Gastrocnemius medialis (tissue), 4 donors: ENCODE measurements at regions of chr16 and their contacts with region 1.

Region 1: DNA sequence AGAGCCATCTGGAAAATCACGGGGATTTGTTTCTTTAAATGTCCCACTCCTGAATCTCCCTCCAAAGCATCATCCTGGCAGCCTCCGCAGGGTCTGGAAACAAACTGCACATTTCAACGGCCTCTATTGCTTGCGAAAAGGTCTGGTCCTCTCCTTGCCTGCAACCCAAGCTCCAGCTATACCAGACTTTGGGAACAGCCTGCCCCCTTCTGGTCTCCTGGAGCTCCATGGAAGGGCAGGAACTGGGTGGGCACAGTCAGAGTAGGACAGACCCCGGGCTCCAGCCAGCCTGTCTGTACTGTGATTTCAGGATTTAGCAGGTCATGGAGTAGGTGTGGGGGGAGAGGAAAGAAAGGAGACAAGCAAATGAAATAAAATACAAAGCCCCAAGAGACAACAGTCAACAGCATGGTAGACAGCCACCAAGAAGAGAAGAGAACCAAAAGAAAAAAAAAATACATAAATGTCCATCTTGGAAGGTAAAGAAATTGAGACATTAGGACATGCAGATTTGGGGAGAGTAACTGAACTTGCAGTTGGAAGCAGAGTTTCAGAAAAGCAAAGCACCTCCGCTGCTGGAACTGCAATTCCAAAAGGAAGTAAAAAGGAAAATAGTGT is 2.7 kb downstream of the XYLT1 start:
- DNase-seq: peak; percentile 30 to 36
- ATAC-seq: no peak
- H3K4me3 ChIP-seq: no peak overlapping the region
- H3K27ac ChIP-seq: no peak overlapping the region
- H3K4me1 ChIP-seq: peaks cover 7 to 20% of the 10 kb centered on the region in 2 donors
- H3K27me3 ChIP-seq: peaks cover 13 to 27% (median 25%) of the 10 kb centered on the region in 3 donors
- CTCF ChIP-seq: peak; percentile 36 to 56 (median 43)
- POLR2A ChIP-seq: no peak

Region 2: GRCh38 chr16:17194190-17194780 is 273.7 kb before region 1 on chr16:
- in situ Hi-C with region 1: no loop called
- intact Hi-C with region 1: loop called (anchors 10 kb)
- DNase-seq: peak; percentile 5 to 28
- ATAC-seq: no peak
- H3K4me3 ChIP-seq: no peak overlapping the region
- H3K27ac ChIP-seq: no peak overlapping the region
- H3K4me1 ChIP-seq: no peaks in the 10 kb centered on the region
- H3K27me3 ChIP-seq: no peaks in the 10 kb centered on the region
- CTCF ChIP-seq: peak in 4 of 5 experiments; percentile 28 to 62 (median 55)
- POLR2A ChIP-seq: no peak

Region 3: GRCh38 chr16:17271687-17272086 is 196.3 kb before region 1 on chr16:
- in situ Hi-C with region 1: loop called in 1 of 4 experiments (anchors 10 kb)
- intact Hi-C with region 1: loop called (anchors 2 kb)
- DNase-seq: no peak
- ATAC-seq: no peak
- H3K4me3 ChIP-seq: no peak overlapping the region
- H3K27ac ChIP-seq: peak overlapping the region in 1 of 4 donors; percentile 26
- H3K4me1 ChIP-seq: peaks cover 17 to 32% of the 10 kb centered on the region in 2 donors
- H3K27me3 ChIP-seq: no peaks in the 10 kb centered on the region
- CTCF ChIP-seq: no peak
- POLR2A ChIP-seq: no peak

Region 4: DNA sequence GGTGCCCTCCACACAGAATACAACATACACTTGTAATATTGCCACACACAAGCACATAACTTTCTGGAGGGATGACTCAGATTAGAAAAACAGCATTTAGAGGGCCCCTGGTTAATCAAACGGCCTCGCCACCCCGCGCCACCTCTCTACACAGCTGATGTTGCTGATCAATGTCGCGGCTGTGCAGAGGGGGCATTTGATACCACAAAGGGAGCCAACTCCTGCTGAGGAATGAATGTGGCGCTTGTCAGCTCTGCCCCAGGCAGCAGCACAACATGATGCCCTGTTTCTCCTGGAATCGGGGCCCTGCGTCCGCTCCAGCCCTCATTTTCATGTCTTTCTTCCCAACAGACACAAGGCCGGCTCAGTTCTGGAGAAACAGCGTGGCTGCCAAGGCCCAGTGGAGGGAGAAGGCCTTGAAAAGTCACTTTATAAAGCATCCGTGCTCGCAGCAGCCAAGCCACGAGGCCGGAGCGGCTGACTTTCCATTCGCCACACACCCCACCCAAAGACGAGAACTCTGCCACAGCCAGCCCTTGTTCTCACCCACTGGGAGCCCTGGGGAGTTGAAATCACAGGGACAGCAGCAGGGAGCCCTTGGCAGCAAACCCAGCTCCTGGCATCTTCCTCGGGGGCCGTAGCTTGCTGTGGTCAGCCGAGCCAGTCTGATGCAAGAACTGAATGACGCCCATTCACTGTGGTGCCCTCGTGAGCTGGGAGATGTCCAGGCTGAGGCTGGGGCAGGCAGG is 62.9 kb before region 1 on chr16:
- in situ Hi-C with region 1: no loop called
- intact Hi-C with region 1: loop called (anchors 1 kb)
- DNase-seq: peak; percentile 50 to 77
- ATAC-seq: peak; percentile 76 to 81
- H3K4me3 ChIP-seq: peak overlapping the region in 3 of 4 donors; percentile 10 to 27 (median 18)
- H3K27ac ChIP-seq: peak overlapping the region; percentile 62 to 80 (median 64)
- H3K4me1 ChIP-seq: peaks cover 7 to 13% of the 10 kb centered on the region in 2 donors
- H3K27me3 ChIP-seq: no peaks in the 10 kb centered on the region
- CTCF ChIP-seq: no peak
- POLR2A ChIP-seq: peak in 1 of 2 donors; percentile 8

Region 5: GRCh38 chr16:17432901-17433576 is 35.0 kb before region 1 on chr16:
- in situ Hi-C with region 1: no loop called
- intact Hi-C with region 1: no loop called
- DNase-seq: no peak
- ATAC-seq: peak in 1 of 2 donors; percentile 53
- H3K4me3 ChIP-seq: no peak overlapping the region
- H3K27ac ChIP-seq: peak overlapping the region in 2 of 4 donors; percentile 11 to 29
- H3K4me1 ChIP-seq: peaks cover 9 to 22% of the 10 kb centered on the region in 2 donors
- H3K27me3 ChIP-seq: no peaks in the 10 kb centered on the region
- CTCF ChIP-seq: no peak
- POLR2A ChIP-seq: no peak

Region 6: DNA sequence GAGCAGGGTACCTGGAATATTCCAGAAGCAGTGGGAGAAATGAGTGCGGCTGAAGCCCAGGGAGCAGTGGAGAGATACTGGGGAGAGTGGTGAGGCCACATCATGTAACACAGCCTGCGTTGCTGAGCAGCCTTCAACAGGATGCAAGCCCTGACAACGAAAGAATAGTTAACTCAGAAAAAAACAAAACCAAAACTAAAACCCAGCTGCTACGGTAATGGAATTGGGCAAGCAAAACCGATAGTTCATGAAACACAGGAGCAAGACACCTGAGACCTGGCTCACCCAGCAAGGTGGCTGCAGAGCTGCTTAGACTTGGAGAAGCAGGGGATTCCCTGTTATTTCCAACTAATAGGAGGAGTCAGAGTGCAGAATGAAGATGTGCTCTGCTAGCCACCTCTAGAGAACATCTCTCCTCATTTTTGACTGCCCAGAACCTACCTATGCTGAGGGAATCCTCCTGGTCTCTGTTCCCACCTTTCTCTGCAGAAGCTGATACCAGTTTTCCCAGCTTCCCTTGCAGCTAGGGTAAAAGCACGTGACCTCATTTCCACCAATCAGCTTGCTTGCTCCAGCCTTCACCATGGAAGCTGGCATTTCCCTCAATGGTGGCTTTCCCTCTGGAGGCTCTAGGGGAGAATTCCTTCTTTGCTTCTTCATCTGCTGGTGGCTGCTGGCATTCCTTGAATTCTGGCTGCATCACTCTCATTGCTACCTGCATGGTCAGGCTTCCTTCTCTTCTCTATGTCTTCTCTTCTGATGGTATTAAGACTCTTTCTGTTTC is 62.1 kb after region 1 on chr16:
- in situ Hi-C with region 1: no loop called
- intact Hi-C with region 1: no loop called
- DNase-seq: no peak
- ATAC-seq: no peak
- H3K4me3 ChIP-seq: no peak overlapping the region
- H3K27ac ChIP-seq: no peak overlapping the region
- H3K4me1 ChIP-seq: no peaks in the 10 kb centered on the region
- H3K27me3 ChIP-seq: no peaks in the 10 kb centered on the region
- CTCF ChIP-seq: no peak
- POLR2A ChIP-seq: no peak